ENCODE measurements at regions of chr6 and their contacts with region 1.

Region 1: GRCh38 chr6:3732345-3733141 is 19.0 kb downstream of the PXDC1 start:
- DNase-seq: peak; percentile 29 to 83 (median 68)
- ATAC-seq: peak; percentile 76
- H3K4me3 ChIP-seq: no peak overlapping the region
- H3K4me3 Mint-ChIP-seq: no peak overlapping the region
- H3K27ac ChIP-seq: no peak overlapping the region
- H3K27ac Mint-ChIP-seq: no peak overlapping the region
- H3K4me1 ChIP-seq: no peaks in the 10 kb centered on the region
- H3K4me1 Mint-ChIP-seq: peaks cover 2% of the 10 kb centered on the region
- H3K27me3 ChIP-seq: no peaks in the 10 kb centered on the region
- H3K27me3 Mint-ChIP-seq: peaks cover 11% of the 10 kb centered on the region
- CTCF ChIP-seq: peak; percentile 66

Region 2: GRCh38 chr6:3251462-3252314 is 480.9 kb before region 1 on chr6:
- CTCF ChIA-PET with region 1: interaction called, 10 read pairs
- POLR2A ChIA-PET with region 1: no interaction called
- intact Hi-C with region 1: no loop called
- DNase-seq: peak; percentile 61 to 87 (median 80)
- ATAC-seq: peak; percentile 99
- H3K4me3 ChIP-seq: no peak overlapping the region
- H3K4me3 Mint-ChIP-seq: peak overlapping the region; percentile 32
- H3K27ac ChIP-seq: no peak overlapping the region
- H3K27ac Mint-ChIP-seq: no peak overlapping the region
- H3K4me1 ChIP-seq: no peaks in the 10 kb centered on the region
- H3K4me1 Mint-ChIP-seq: peaks cover 6% of the 10 kb centered on the region
- H3K27me3 ChIP-seq: peaks cover 3 to 5% of the 10 kb centered on the region in 2 experiments
- H3K27me3 Mint-ChIP-seq: peaks cover 26% of the 10 kb centered on the region
- CTCF ChIP-seq: peak; percentile 95

Region 3: GRCh38 chr6:3381233-3381921 is 351.2 kb before region 1 on chr6:
- CTCF ChIA-PET with region 1: no interaction called
- POLR2A ChIA-PET with region 1: no interaction called
- intact Hi-C with region 1: no loop called
- DNase-seq: no peak
- ATAC-seq: no peak
- H3K4me3 ChIP-seq: no peak overlapping the region
- H3K4me3 Mint-ChIP-seq: no peak overlapping the region
- H3K27ac ChIP-seq: no peak overlapping the region
- H3K27ac Mint-ChIP-seq: no peak overlapping the region
- H3K4me1 ChIP-seq: peaks cover 14% of the 10 kb centered on the region
- H3K4me1 Mint-ChIP-seq: peaks cover 14% of the 10 kb centered on the region
- H3K27me3 ChIP-seq: no peaks in the 10 kb centered on the region
- H3K27me3 Mint-ChIP-seq: peaks cover 16% of the 10 kb centered on the region
- CTCF ChIP-seq: no peak

Region 4: GRCh38 chr6:3410385-3411360 is 321.9 kb before region 1 on chr6:
- CTCF ChIA-PET with region 1: interaction called, 28 read pairs
- POLR2A ChIA-PET with region 1: no interaction called
- intact Hi-C with region 1: loop called in 1 of 2 experiments (anchors 1 kb)
- DNase-seq: peak; percentile 30 to 77 (median 68)
- ATAC-seq: peak; percentile 70
- H3K4me3 ChIP-seq: no peak overlapping the region
- H3K4me3 Mint-ChIP-seq: no peak overlapping the region
- H3K27ac ChIP-seq: no peak overlapping the region
- H3K27ac Mint-ChIP-seq: no peak overlapping the region
- H3K4me1 ChIP-seq: peaks cover 6% of the 10 kb centered on the region
- H3K4me1 Mint-ChIP-seq: peaks cover 10% of the 10 kb centered on the region
- H3K27me3 ChIP-seq: no peaks in the 10 kb centered on the region
- H3K27me3 Mint-ChIP-seq: no peaks in the 10 kb centered on the region
- CTCF ChIP-seq: peak; percentile 60

Region 5: DNA sequence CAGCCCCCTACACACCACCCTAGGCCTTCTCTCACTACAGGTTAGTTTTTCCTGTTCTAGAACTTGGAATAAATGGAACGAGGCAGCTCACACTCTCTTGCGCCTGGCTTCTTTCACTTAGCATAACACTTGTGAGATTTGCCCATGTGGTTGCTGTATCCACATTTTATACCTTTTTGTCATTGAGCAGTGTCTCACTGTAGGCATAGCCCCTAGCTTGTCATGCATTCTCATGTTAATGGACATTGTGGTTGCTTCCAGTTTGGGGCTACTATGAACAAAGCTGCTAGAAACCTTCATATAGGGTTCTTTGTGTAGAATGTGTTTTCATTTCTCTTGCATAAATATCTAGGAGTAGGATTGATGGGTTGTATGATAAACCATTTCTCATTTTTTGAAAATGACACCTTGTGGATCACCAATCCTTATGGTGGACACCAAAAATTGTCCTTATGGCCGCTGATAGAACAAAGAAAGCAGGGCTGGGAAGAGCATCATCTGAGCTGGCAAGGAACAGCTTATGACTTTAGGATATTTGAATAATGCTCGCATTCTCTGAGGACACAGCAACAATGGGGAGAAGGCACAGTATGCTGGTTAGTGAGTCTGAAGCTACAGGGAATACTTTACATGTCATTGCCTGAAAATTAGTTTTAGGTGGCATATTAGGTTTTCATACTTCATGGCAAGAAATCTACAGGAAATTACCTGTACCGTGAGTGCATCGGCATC is 265.9 kb before region 1 on chr6:
- CTCF ChIA-PET with region 1: no interaction called
- POLR2A ChIA-PET with region 1: no interaction called
- intact Hi-C with region 1: loop called in 1 of 2 experiments (anchors 5 kb)
- DNase-seq: no peak
- ATAC-seq: no peak
- H3K4me3 ChIP-seq: no peak overlapping the region
- H3K4me3 Mint-ChIP-seq: no peak overlapping the region
- H3K27ac ChIP-seq: no peak overlapping the region
- H3K27ac Mint-ChIP-seq: no peak overlapping the region
- H3K4me1 ChIP-seq: no peaks in the 10 kb centered on the region
- H3K4me1 Mint-ChIP-seq: no peaks in the 10 kb centered on the region
- H3K27me3 ChIP-seq: no peaks in the 10 kb centered on the region
- H3K27me3 Mint-ChIP-seq: no peaks in the 10 kb centered on the region
- CTCF ChIP-seq: no peak

Region 6: DNA sequence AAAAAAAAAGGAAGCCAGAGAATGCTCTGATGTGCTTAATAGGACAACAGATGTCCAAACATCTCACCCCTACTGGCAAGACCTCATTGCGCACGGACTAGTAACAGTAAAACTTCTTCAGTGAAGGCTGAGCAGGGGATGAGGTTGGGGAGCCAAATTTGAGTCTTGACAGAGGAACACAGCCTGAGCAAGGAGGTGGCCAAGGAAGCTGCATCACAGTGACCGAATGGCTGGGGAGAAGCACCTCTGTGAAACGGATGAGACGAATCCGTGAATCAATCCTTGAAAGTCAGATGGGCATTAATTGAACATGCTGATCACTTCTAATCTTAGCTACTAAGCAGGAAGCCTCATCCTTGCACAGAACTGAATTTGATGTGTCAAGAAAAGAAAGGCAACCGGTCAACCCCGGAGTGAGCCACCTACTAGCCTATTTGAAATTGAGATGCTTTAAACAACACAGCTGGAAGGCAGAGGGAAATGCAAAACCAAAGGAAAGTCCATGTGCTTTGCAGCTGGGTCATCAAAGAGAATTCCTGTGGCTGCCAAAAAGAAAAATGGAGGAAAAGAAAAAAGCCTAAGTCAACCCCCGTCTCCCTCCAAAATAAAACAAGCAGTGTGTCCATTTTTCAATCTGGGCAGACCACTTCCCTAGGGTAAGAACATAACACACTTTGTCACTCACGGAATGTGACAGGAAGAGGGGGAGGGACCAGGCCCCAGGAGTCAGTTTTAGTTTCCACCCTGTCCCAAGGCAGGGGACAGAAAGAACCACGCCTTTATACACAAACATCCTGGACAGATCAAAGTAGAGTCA is 10.5 kb before region 1 on chr6:
- CTCF ChIA-PET with region 1: interaction called, 26 read pairs
- POLR2A ChIA-PET with region 1: no interaction called
- intact Hi-C with region 1: no loop called
- DNase-seq: no peak
- ATAC-seq: no peak
- H3K4me3 ChIP-seq: no peak overlapping the region
- H3K4me3 Mint-ChIP-seq: no peak overlapping the region
- H3K27ac ChIP-seq: no peak overlapping the region
- H3K27ac Mint-ChIP-seq: no peak overlapping the region
- H3K4me1 ChIP-seq: no peaks in the 10 kb centered on the region
- H3K4me1 Mint-ChIP-seq: peaks cover 34% of the 10 kb centered on the region
- H3K27me3 ChIP-seq: no peaks in the 10 kb centered on the region
- H3K27me3 Mint-ChIP-seq: no peaks in the 10 kb centered on the region
- CTCF ChIP-seq: no peak

Region 7: GRCh38 chr6:4543596-4543995 is 811.1 kb after region 1 on chr6:
- CTCF ChIA-PET with region 1: no interaction called
- POLR2A ChIA-PET with region 1: no interaction called
- intact Hi-C with region 1: no loop called
- DNase-seq: no peak
- ATAC-seq: no peak
- H3K4me3 ChIP-seq: no peak overlapping the region
- H3K4me3 Mint-ChIP-seq: no peak overlapping the region
- H3K27ac ChIP-seq: no peak overlapping the region
- H3K27ac Mint-ChIP-seq: no peak overlapping the region
- H3K4me1 ChIP-seq: no peaks in the 10 kb centered on the region
- H3K4me1 Mint-ChIP-seq: no peaks in the 10 kb centered on the region
- H3K27me3 ChIP-seq: no peaks in the 10 kb centered on the region
- H3K27me3 Mint-ChIP-seq: peaks cover 2% of the 10 kb centered on the region
- CTCF ChIP-seq: no peak

Measured in CD8-positive, alpha-beta T cell (primary cell).